ENCODE measurements at regions of chr16 and their contacts with region 1.

Region 1: GRCh38 chr16:89815639-89816348 is 653 bp downstream of the FANCA start:
- DNase-seq: no peak
- H3K4me3 Mint-ChIP-seq: peak overlapping the region; percentile 85
- H3K27ac Mint-ChIP-seq: peak overlapping the region; percentile 61
- H3K4me1 Mint-ChIP-seq: peaks cover 36% of the 10 kb centered on the region
- H3K27me3 Mint-ChIP-seq: no peaks in the 10 kb centered on the region

Region 2: DNA sequence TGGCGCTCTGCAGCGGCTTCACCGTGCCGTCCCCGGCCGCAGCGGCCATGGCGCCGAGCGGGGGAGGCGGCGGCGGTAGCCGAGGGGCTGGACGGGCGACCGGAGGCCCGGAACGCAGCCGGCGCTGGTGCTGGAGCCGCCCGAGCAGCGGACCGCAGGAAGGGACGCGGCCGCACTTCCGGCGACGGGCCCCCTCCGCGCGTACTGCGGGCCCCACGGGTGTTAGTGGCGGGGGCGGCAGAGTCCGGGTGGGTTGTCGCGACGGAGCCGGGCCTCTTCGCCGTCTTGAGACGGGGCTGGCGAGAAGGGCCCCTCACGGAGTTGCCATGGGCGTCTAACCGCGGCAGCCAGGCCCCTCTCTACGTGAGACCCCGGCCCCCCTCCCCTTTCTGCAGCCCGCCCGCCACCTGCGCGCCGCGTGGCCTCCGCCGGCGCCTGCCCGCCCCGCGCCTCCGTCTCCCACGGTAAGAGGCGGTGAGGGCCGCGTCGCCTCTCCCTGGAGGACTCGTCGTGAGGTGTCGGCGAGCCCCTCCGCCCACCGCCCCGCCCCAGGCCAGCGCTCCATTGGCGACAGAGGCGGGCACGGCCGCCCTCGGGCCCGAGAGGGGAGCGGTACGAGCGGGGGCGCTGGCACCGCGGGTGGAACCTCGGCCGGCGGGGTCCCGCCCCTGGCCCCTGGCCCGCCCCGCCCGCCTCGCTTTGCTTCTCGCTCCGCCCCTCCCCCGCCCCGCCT is 94.8 kb before region 1 on chr16 and contains the starts of genes VPS9D1 and ZNF276:
- CTCF ChIA-PET with region 1: no interaction called
- intact Hi-C with region 1: loop called (anchors 1 kb)
- DNase-seq: peak; percentile 84
- H3K4me3 Mint-ChIP-seq: peak within 1 kb of the TSS; percentile 77
- H3K27ac Mint-ChIP-seq: peak within 1 kb of the TSS; percentile 85
- H3K4me1 Mint-ChIP-seq: peaks cover 43% of the 10 kb centered on the region
- H3K27me3 Mint-ChIP-seq: no peaks in the 10 kb centered on the region
- total RNA-seq, gene VPS9D1: 0.91 to 1.4 TPM
- total RNA-seq, gene ZNF276: 19.8 to 25.3 TPM

Region 3: DNA sequence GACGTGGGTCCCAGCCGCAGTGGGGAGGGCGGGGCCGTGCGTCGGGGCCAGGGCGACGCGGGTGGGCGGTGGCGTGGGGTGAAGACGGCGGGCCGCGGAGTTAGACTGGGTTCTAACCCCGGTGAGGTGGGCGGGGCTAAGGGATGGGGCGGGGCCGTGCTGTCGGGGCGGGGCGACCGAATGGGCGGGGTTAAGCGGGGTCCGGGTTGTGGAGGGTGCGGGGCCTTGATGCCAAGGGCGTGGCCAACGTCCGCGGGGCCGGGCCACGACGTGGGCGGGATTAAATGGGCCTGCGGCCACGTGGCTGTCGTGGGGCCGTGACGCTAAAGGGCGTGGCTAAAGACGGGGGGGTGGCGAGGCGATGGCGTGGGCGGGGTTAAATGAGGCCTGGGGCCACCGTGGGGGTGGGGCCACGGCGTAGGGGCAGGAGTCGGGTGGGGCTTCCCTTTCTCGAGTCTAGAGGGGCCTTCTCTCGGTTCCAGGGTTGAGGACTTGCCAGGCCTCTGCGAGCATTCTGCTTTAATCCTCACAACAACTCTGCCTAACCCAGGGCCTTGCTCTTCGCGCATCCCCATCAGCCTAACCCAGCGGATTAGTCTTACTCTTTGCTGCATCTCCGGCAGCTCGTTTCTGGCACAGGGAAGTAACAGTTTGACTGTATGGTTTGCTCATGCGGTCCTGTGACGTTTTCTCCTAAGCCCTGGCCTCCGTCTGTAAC is 58.3 kb after region 1 on chr16:
- CTCF ChIA-PET with region 1: no interaction called
- intact Hi-C with region 1: loop called (anchors 1 kb)
- DNase-seq: peak; percentile 95
- H3K4me3 Mint-ChIP-seq: peak overlapping the region; percentile 91
- H3K27ac Mint-ChIP-seq: peak overlapping the region; percentile 95
- H3K4me1 Mint-ChIP-seq: peaks cover 13% of the 10 kb centered on the region
- H3K27me3 Mint-ChIP-seq: no peaks in the 10 kb centered on the region

Region 4: GRCh38 chr16:89924297-89925276 is 108.8 kb after region 1 on chr16:
- CTCF ChIA-PET with region 1: no interaction called
- intact Hi-C with region 1: loop called (anchors 5 kb)
- DNase-seq: peak; percentile 42
- H3K4me3 Mint-ChIP-seq: no peak overlapping the region
- H3K27ac Mint-ChIP-seq: no peak overlapping the region
- H3K4me1 Mint-ChIP-seq: peaks cover 30% of the 10 kb centered on the region
- H3K27me3 Mint-ChIP-seq: peaks cover 47% of the 10 kb centered on the region

Measured in activated naive CD4-positive, alpha-beta T cell treated with anti-CD3 and anti-CD28 coated beads for 36 hours (primary cell).